ENCODE measurements at regions of chr15 and their contacts with region 1.

Region 1: GRCh38 chr15:67542420-67543347 is at the start of gene MAP2K5:
- DNase-seq: peak; percentile 72
- H3K4me3 ChIP-seq: peak within 1 kb of the TSS; percentile 83 to 91 (median 84)
- H3K27ac ChIP-seq: peak within 1 kb of the TSS; percentile 57
- H3K4me1 ChIP-seq: peaks cover 6% of the 10 kb centered on the region
- H3K27me3 ChIP-seq: no peaks in the 10 kb centered on the region
- CTCF ChIP-seq: no peak
- total RNA-seq, gene MAP2K5: 6.5 to 22.8 TPM

Region 2: GRCh38 chr15:67322481-67322880 is 220.2 kb before region 1 on chr15:
- CTCF ChIA-PET with region 1: no interaction called
- dilution Hi-C with region 1: no loop called
- in situ Hi-C with region 1: no loop called
- intact Hi-C with region 1: no loop called
- DNase-seq: no peak
- H3K4me3 ChIP-seq: no peak overlapping the region
- H3K27ac ChIP-seq: no peak overlapping the region
- H3K4me1 ChIP-seq: no peaks in the 10 kb centered on the region
- H3K27me3 ChIP-seq: no peaks in the 10 kb centered on the region
- CTCF ChIP-seq: no peak

Region 3: DNA sequence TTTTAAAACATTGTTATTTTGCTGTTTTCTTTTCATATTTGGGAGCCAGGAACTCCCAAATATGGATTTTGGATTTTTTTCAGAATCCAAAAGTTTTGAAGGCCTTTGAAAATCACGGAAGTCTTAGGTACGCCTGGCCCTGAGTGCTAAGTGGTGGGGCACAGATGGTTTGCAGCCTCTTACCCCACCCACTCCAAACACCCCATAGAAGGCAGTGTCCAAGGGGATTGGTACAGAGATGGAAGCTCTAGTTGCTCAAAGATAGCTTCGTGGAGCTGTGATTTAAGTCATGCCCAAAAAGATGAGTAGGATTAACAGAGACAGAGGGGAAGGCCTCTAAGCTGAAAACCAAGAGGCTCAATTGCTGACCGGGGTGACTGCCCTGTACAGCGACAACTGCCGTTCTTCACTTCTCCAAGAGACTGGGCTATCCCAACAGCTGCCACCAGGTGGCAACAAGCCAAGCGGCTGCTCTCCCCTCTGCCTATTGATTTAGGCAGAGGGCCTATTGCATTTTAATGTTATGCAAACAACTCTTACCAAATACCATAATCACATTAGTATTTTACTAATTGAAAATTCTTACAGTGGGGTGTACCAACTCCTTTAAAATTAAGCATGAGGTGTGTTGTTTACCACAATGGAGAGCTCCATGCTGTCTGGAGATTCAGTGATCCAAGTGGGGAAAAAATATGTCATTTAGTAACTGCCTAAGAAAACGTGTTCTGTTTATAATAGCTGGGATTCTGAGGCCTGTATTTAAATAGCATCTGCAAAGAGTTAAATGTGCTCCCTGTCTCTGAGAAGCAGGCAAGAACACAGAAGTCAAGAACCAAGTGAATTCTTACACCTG is 85.8 kb before region 1 on chr15:
- CTCF ChIA-PET with region 1: no interaction called
- dilution Hi-C with region 1: no loop called
- in situ Hi-C with region 1: no loop called
- intact Hi-C with region 1: loop called (anchors 1 kb)
- DNase-seq: peak; percentile 46
- H3K4me3 ChIP-seq: no peak overlapping the region
- H3K27ac ChIP-seq: no peak overlapping the region
- H3K4me1 ChIP-seq: no peaks in the 10 kb centered on the region
- H3K27me3 ChIP-seq: no peaks in the 10 kb centered on the region
- CTCF ChIP-seq: peak; percentile 89 to 93

Region 4: DNA sequence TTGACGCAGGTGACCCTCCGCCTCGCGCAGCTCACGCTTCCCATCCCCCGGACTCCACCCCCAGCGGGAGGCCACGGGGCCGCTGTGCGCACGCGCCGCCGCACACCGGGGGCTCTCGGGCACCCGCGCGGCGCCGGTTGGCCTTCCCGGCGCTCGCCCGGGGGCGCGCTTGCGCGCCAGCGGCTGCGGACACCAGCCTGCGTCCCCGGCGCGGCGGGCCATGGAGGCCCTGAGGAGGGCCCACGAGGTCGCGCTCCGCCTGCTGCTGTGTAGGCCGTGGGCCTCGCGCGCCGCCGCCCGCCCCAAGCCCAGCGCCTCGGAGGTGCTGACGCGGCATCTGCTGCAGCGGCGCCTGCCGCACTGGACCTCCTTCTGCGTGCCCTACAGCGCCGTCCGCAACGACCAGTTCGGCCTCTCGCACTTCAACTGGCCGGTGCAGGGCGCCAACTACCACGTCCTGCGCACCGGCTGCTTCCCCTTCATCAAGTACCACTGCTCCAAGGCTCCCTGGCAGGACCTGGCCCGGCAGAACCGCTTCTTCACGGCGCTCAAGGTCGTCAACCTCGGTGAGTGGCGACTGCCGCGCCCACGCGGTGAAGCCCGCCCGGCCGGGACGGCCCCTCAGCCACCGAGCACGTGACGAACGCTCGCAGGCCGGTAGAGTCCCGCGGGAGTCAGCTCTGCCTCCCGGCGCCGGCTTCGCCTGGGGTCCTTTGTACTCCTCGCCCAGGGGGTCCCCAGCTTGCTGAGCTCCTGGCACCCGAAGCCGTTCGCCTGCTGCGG is 21.5 kb before region 1 on chr15 and contains the start of gene C15orf61:
- CTCF ChIA-PET with region 1: no interaction called
- dilution Hi-C with region 1: no loop called
- in situ Hi-C with region 1: no loop called
- intact Hi-C with region 1: loop called (anchors 1 kb)
- DNase-seq: peak; percentile 87
- H3K4me3 ChIP-seq: peak within 1 kb of the TSS; percentile 75 to 85 (median 75)
- H3K27ac ChIP-seq: peak within 1 kb of the TSS; percentile 85
- H3K4me1 ChIP-seq: peaks cover 10% of the 10 kb centered on the region
- H3K27me3 ChIP-seq: no peaks in the 10 kb centered on the region
- CTCF ChIP-seq: no peak
- total RNA-seq, gene C15orf61: 6.2 to 6.3 TPM

Region 5: DNA sequence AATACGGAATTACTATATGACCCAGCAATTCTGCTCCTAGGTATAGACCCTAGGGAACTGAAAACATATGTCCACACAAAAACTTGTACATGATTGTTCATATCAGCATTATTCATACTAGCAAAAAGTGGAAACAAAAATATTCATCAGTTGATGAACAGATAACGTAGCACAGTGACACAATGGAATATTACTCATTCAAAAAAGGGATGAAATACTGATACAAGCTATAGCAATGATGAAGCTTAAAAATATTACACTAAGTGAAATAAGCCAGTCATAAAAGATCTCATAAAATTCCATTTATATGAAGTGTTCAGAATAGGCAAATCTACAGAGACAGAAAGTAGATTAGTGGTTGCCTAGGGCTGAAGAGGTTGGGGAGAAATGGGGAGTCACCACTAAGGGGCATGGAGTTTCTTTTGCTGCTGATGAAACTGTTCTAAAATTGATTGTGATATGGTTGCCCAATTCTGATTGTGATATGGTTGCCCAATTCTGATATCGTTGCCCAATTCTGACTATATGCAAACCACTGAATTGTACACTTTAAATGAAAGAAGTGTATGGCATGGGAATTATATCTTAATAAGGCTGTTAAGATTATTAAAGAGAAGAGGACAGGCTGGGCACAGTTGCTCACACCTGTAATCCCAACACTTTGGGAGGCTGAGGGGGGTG is 11.2 kb before region 1 on chr15:
- CTCF ChIA-PET with region 1: no interaction called
- dilution Hi-C with region 1: no loop called
- in situ Hi-C with region 1: no loop called
- intact Hi-C with region 1: loop called (anchors 1 kb)
- DNase-seq: peak; percentile 87
- H3K4me3 ChIP-seq: no peak overlapping the region
- H3K27ac ChIP-seq: peak overlapping the region; percentile 50
- H3K4me1 ChIP-seq: peaks cover 12% of the 10 kb centered on the region
- H3K27me3 ChIP-seq: no peaks in the 10 kb centered on the region
- CTCF ChIP-seq: no peak

Region 6: GRCh38 chr15:67833710-67834511 is 291.2 kb after region 1 on chr15:
- CTCF ChIA-PET with region 1: no interaction called
- dilution Hi-C with region 1: no loop called
- in situ Hi-C with region 1: loop called in 1 of 2 experiments (anchors 10 kb)
- intact Hi-C with region 1: loop called (anchors 2 kb)
- DNase-seq: no peak
- H3K4me3 ChIP-seq: peak overlapping the region; percentile 5 to 23 (median 15)
- H3K27ac ChIP-seq: no peak overlapping the region
- H3K4me1 ChIP-seq: peaks cover 31% of the 10 kb centered on the region
- H3K27me3 ChIP-seq: peaks cover 49% of the 10 kb centered on the region
- CTCF ChIP-seq: peak; percentile 6 to 60